Activated CD4-positive, alpha-beta T cell treated with anti-CD3 and anti-CD28 coated beads for 36 hours (primary cell): ENCODE measurements at regions of chr6 and their contacts with region 1.

Region 1: GRCh38 chr6:35522660-35523658 is 10.3 kb upstream of the TULP1 start:
- DNase-seq: peak; percentile 90
- ATAC-seq: peak; percentile 91
- H3K4me3 Mint-ChIP-seq: peak overlapping the region; percentile 57
- H3K27ac Mint-ChIP-seq: peak overlapping the region; percentile 81
- H3K4me1 Mint-ChIP-seq: peaks cover 5% of the 10 kb centered on the region
- H3K27me3 Mint-ChIP-seq: no peaks in the 10 kb centered on the region

Region 2: DNA sequence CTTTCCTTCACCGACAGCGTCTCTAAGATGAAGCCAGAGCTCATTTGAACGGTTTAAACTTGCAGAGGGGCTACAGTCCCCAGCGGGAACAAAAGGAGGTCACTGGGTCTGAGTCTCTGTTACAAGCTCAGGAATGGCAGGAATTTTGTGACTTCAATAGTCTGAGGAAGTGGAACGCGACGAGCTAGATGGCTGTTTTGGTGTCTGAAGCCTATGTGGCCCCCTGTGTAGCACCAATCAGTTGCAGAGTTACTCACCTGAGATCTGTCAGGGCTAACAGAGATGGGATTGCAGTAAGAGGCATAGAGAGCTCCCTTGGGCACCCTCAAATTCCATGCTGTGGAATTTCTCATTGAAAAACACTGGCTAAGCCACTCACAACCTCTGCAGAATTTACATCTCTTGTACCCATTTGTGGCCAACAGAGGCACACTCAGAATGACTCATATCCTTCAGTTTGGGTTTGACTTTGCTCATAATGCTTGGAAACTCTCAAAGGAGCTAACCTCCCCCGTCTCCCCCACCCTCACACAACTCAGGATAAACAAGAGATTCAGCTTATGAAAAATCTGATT is 374.7 kb before region 1 on chr6:
- CTCF ChIA-PET with region 1: no interaction called
- POLR2A ChIA-PET with region 1: no interaction called
- intact Hi-C with region 1: no loop called
- DNase-seq: peak; percentile 74
- ATAC-seq: peak; percentile 99
- H3K4me3 Mint-ChIP-seq: no peak overlapping the region
- H3K27ac Mint-ChIP-seq: no peak overlapping the region
- H3K4me1 Mint-ChIP-seq: peaks cover 21% of the 10 kb centered on the region
- H3K27me3 Mint-ChIP-seq: peaks cover 11% of the 10 kb centered on the region

Region 3: GRCh38 chr6:35552285-35552917 is 29.4 kb after region 1 on chr6:
- CTCF ChIA-PET with region 1: interaction called, 47 read pairs
- POLR2A ChIA-PET with region 1: no interaction called
- intact Hi-C with region 1: loop called (anchors 1 kb)
- DNase-seq: peak; percentile 80
- ATAC-seq: peak; percentile 60
- H3K4me3 Mint-ChIP-seq: no peak overlapping the region
- H3K27ac Mint-ChIP-seq: no peak overlapping the region
- H3K4me1 Mint-ChIP-seq: no peaks in the 10 kb centered on the region
- H3K27me3 Mint-ChIP-seq: no peaks in the 10 kb centered on the region

Region 4: GRCh38 chr6:35737413-35738211 is 214.7 kb after region 1 on chr6:
- CTCF ChIA-PET with region 1: interaction called, 46 read pairs
- POLR2A ChIA-PET with region 1: no interaction called
- intact Hi-C with region 1: loop called (anchors 1 kb)
- DNase-seq: no peak
- ATAC-seq: peak; percentile 76
- H3K4me3 Mint-ChIP-seq: peak overlapping the region; percentile 56
- H3K27ac Mint-ChIP-seq: peak overlapping the region; percentile 83
- H3K4me1 Mint-ChIP-seq: peaks cover 47% of the 10 kb centered on the region
- H3K27me3 Mint-ChIP-seq: no peaks in the 10 kb centered on the region

Region 5: GRCh38 chr6:35955976-35956375 is 433.0 kb after region 1 on chr6:
- CTCF ChIA-PET with region 1: no interaction called
- POLR2A ChIA-PET with region 1: no interaction called
- intact Hi-C with region 1: loop called in 1 of 2 experiments (anchors 2 kb)
- DNase-seq: peak; percentile 56
- ATAC-seq: no peak
- H3K4me3 Mint-ChIP-seq: no peak overlapping the region
- H3K27ac Mint-ChIP-seq: no peak overlapping the region
- H3K4me1 Mint-ChIP-seq: peaks cover 14% of the 10 kb centered on the region
- H3K27me3 Mint-ChIP-seq: peaks cover 5% of the 10 kb centered on the region